Endothelial cell of umbilical vein (primary cell): ENCODE measurements at regions of chr1 and their contacts with region 1.

Region 1: DNA sequence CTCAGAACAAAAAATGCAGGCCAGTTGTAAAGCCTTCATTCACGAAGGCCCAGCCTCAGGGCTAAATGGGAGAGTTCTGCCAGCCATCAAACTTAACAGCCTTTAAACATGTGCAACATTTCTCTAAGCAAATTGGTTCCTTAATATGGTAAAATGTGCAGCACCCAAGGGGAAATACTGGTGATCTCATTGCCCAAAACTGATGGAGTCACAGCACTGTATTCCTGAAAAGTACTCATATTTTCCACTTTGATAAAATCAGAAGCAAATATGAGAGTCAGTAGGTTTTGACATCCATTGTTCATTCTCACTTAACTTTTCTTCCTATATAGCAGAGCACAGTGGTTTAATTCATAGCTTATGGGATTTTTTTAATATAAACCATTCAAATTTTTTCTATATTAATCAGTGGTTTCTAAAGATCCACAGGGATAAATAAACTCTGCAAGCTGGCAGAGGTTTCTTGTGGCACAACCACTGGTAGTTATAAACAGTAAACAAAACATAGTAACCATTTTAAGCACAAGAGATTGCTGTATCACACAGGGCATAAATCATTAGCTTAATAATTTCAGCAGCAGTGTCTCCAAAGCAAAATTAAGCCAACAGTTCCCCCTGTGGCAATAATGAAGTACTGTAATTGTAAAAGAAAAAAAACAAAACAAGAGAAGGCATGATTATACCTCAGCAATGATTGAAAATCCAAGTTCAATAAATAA is 106.9 kb upstream of the LYPLAL1 start:
- DNase-seq: peak; percentile 75
- H3K4me3 ChIP-seq: no peak overlapping the region
- H3K27ac ChIP-seq: no peak overlapping the region
- H3K4me1 ChIP-seq: no peaks in the 10 kb centered on the region
- H3K27me3 ChIP-seq: no peaks in the 10 kb centered on the region
- CTCF ChIP-seq: peak; percentile 37 to 39
- POLR2A ChIP-seq: no peak

Region 2: DNA sequence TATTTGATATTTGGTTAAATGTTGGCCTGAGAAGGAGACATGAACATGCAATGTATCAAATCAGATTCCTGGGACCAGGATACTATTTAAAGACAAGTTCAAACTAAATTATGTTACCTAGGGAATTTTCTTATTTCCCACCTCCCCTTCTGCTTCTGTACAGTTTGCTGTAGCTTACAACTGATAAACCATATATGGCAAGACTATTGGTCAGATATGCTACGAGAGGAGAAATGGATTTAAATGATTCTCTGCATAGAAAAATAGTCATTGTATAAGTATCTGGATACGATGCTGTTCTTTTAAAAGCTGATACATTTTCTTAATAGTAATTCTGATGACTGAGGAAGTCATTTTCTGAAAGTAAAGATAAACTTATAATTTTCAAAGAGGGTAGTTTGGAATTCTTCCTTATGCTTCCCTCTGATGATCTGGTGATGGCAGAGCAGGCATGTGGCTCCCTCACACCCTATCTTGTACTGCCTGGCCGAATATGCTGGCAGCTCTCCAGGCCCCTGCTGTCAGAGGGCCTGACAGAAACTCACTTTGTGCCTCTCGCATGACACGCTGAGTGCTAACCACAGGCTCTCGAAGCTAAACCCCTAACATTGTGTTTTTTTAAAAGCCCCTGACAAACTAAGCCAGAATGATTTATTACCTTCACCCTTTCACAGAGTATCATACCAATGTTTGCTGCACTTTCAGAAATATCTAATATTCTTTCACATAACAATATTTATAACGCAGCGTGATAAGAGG is 762.3 kb before region 1 on chr1:
- CTCF ChIA-PET with region 1: interaction called, 32 read pairs
- POLR2A ChIA-PET with region 1: no interaction called
- dilution Hi-C with region 1: no loop called
- intact Hi-C with region 1: loop called (anchors 1 kb)
- DNase-seq: no peak
- H3K4me3 ChIP-seq: no peak overlapping the region
- H3K27ac ChIP-seq: no peak overlapping the region
- H3K4me1 ChIP-seq: no peaks in the 10 kb centered on the region
- H3K27me3 ChIP-seq: no peaks in the 10 kb centered on the region
- CTCF ChIP-seq: no peak
- POLR2A ChIP-seq: no peak

Region 3: DNA sequence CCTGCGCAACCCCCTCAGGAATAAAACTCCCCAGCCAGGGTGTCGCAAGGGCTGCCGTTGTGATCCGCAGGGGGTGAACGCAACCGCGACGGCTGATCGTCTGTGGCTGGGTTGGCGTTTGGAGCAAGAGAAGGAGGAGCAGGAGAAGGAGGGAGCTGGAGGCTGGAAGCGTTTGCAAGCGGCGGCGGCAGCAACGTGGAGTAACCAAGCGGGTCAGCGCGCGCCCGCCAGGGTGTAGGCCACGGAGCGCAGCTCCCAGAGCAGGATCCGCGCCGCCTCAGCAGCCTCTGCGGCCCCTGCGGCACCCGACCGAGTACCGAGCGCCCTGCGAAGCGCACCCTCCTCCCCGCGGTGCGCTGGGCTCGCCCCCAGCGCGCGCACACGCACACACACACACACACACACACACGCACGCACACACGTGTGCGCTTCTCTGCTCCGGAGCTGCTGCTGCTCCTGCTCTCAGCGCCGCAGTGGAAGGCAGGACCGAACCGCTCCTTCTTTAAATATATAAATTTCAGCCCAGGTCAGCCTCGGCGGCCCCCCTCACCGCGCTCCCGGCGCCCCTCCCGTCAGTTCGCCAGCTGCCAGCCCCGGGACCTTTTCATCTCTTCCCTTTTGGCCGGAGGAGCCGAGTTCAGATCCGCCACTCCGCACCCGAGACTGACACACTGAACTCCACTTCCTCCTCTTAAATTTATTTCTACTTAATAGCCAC is 721.0 kb before region 1 on chr1:
- CTCF ChIA-PET with region 1: interaction called, 161 read pairs
- POLR2A ChIA-PET with region 1: no interaction called
- dilution Hi-C with region 1: no loop called
- intact Hi-C with region 1: no loop called
- DNase-seq: peak; percentile 74
- H3K4me3 ChIP-seq: peak overlapping the region; percentile 86 to 95 (median 88)
- H3K27ac ChIP-seq: peak overlapping the region; percentile 85
- H3K4me1 ChIP-seq: peaks cover 32% of the 10 kb centered on the region
- H3K27me3 ChIP-seq: no peaks in the 10 kb centered on the region
- CTCF ChIP-seq: no peak
- POLR2A ChIP-seq: peak; percentile 75

Region 4: DNA sequence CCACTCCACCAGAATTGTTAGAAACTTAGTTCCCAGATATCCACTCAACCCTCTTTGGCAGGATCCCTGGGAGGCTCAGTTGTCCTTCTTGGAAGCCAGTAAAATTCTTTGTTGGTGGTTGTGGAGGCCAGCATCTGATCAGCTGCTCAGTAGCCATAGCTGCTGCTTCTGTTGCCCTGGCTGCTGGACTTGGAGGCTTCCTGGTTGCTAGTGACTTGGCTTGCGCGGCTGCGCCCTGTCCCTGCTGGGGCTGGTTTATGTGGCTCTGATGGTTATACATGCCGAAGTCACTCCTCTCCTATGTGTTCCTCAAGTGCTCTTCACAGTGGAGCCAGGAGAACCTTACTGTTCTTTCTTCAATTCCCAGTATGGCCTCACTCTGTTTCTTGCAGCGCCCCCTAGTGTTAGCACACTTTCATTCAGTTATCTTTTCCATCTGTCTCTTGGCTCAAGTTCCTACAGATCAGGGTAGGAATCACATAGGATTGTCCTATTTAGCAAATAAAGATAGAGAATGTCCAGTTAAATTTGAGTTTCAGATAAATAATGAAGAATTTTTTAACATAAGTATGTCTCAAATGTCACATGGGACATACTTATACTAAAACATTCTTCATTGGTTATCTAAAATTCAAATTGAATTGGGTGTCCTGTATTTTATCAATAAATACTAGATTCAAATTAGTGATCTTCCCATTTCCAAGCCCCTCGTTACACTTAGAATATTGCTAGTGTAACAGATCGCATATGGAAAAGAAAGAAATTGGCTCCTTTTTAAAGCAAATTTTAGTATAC is 545.2 kb before region 1 on chr1:
- CTCF ChIA-PET with region 1: interaction called, 18 read pairs
- POLR2A ChIA-PET with region 1: no interaction called
- dilution Hi-C with region 1: no loop called
- intact Hi-C with region 1: loop called (anchors 5 kb)
- DNase-seq: peak; percentile 65
- H3K4me3 ChIP-seq: no peak overlapping the region
- H3K27ac ChIP-seq: no peak overlapping the region
- H3K4me1 ChIP-seq: peaks cover 4% of the 10 kb centered on the region
- H3K27me3 ChIP-seq: no peaks in the 10 kb centered on the region
- CTCF ChIP-seq: peak; percentile 45 to 72
- POLR2A ChIP-seq: no peak

Region 5: GRCh38 chr1:218809625-218810024 is 257.2 kb before region 1 on chr1:
- CTCF ChIA-PET with region 1: interaction called, 11 read pairs
- POLR2A ChIA-PET with region 1: no interaction called
- dilution Hi-C with region 1: no loop called
- intact Hi-C with region 1: no loop called
- DNase-seq: peak; percentile 67
- H3K4me3 ChIP-seq: no peak overlapping the region
- H3K27ac ChIP-seq: no peak overlapping the region
- H3K4me1 ChIP-seq: peaks cover 8% of the 10 kb centered on the region
- H3K27me3 ChIP-seq: no peaks in the 10 kb centered on the region
- CTCF ChIP-seq: no peak
- POLR2A ChIP-seq: no peak

Region 6: DNA sequence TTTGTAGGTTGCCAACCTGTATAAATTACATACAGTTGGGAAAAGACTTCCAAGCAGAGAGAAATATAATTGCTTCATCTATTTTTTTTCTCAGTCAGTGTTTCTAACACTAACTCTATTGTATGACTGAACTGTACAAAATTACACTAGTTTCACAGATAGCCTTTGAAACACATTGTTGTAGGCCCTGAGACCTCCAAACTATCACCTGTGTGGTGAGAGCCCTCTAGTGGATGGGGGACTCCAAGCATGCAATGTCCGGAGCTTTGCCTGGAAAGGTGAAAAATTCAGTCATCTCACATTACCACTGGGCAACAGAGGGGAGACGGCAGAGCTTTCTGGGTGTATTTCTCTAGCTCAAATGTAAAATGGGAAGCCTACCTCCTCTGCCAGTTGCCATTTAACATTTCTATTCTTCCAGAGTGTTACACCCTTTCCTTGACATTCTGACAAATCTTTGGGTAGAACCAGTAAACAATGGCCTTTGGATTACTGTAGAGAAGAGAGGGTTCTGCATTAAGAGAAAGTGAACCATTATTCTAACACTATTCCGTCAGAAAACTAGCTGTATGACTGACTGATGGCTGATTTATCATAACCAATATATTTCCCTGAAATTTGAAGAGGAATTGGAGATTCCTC is 319.1 kb after region 1 on chr1:
- CTCF ChIA-PET with region 1: interaction called, 9 read pairs
- POLR2A ChIA-PET with region 1: no interaction called
- dilution Hi-C with region 1: no loop called
- intact Hi-C with region 1: loop called (anchors 5 kb)
- DNase-seq: peak; percentile 66
- H3K4me3 ChIP-seq: no peak overlapping the region
- H3K27ac ChIP-seq: no peak overlapping the region
- H3K4me1 ChIP-seq: no peaks in the 10 kb centered on the region
- H3K27me3 ChIP-seq: no peaks in the 10 kb centered on the region
- CTCF ChIP-seq: peak; percentile 70 to 81
- POLR2A ChIP-seq: no peak

Region 7: DNA sequence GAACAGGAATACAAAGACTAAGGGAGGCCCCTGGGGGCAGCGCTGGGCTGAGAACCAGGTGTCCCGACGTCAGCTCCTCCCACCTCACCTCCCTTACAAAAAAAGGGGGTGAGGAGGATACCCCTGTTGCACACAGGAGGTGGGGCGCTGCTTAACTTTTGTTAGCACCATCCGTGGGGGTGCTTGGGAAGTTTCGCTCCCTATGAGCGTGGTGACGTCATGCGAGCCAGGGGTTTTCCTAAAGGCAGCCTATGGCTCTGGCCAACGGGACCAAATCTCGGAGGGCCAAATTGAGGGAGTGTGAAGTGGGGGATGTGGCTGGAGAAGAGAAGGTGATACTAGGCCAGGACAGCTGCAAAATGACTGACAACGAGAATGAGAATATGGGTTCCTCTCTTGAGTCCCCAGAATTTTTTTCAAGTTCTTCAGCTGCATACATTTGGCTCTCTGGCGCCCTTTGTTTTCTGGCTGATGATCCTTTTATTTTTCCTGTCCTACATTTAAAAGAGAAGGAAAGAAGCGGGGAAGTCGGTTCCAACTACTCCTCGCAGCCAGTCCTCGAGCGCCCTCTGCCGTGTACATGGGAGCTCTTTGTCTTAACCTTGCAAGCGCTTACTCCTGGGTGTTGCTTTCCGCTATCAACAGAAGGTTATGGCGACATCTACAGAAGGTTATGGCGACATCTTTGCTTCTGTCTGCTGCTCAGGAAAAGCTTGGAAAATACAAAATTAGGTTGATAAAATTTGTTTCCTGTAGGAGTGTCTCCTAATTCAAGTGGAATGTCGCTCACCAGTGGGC is 594.1 kb after region 1 on chr1:
- CTCF ChIA-PET with region 1: interaction called, 13 read pairs
- POLR2A ChIA-PET with region 1: no interaction called
- dilution Hi-C with region 1: no loop called
- intact Hi-C with region 1: loop called (anchors 1 kb)
- DNase-seq: peak; percentile 84
- H3K4me3 ChIP-seq: peak overlapping the region in 2 of 3 experiments; percentile 24 to 49
- H3K27ac ChIP-seq: no peak overlapping the region
- H3K4me1 ChIP-seq: peaks cover 2% of the 10 kb centered on the region
- H3K27me3 ChIP-seq: peaks cover 0 to 9% of the 10 kb centered on the region in 2 experiments
- CTCF ChIP-seq: peak; percentile 82 to 86
- POLR2A ChIP-seq: no peak